ENCODE measurements at regions of chr18 and their contacts with region 1.

Region 1: DNA sequence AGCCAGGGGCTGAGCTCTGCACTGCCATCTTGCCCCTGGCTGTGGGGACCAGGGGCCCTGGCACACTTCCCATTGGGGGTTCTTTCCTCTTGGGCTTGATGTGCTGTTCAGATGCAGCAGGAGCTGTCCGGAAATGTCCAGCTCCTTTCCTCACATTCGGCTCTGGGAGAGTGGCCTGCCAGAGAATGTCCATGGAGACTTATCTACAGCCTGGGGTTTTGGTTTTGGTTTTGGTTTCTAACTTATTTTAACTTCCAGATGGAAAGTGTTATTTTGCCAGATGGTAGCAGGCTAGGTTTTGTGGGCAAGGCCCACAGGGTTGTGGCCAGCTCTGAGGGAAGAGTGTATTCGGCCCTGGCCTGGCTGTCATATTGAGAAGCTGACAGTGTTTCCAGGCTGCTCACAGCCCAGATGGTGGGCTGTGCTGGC is 177.3 kb downstream of the ANKRD30B start:
- DNase-seq: no peak

Region 2: GRCh38 chr18:14979875-14980274 is 54.6 kb after region 1 on chr18:
- intact Hi-C with region 1: loop called (anchors 10 kb)
- DNase-seq: no peak

Measured in head of caudate nucleus (tissue), 42 donors.